Activated CD8-positive, alpha-beta T cell treated with anti-CD3 and anti-CD28 coated beads for 36 hours (primary cell): ENCODE measurements at regions of chr2 and their contacts with region 1.

Region 1: DNA sequence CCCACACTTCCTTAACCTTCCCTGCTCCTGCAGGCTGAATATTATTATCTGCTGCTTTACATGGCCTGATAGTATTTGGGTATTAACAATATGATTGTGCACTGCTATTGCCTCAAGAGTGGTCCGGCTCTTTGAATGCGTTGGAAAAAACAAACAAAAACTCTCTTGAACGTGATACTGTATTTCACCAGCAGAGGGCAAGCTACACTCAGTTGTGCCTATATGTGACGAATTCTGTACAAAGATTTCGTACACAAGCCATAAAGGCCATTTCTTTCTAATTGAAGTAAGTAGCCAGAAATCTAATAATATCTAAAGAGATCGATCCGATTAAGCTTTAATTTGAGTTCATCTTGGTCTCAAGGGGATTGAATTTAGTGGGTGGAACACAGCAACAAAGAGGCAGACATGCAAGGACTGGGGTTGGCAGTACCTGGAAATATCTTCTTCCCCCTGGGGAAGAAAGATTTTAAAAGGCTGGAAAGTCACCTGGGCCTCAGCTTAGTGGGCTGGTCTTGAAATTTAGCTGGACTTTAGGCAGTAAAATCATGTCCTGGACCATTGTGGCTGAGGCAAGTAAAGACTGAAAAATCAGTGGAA is 49.3 kb upstream of the RAB6D start:
- DNase-seq: peak; percentile 35
- ATAC-seq: peak; percentile 73
- H3K4me3 Mint-ChIP-seq: no peak overlapping the region
- H3K27ac Mint-ChIP-seq: no peak overlapping the region
- H3K4me1 Mint-ChIP-seq: peaks cover 4% of the 10 kb centered on the region
- H3K27me3 Mint-ChIP-seq: peaks cover 16% of the 10 kb centered on the region
- CTCF ChIP-seq: peak; percentile 80

Region 2: GRCh38 chr2:131154071-131154531 is 259.1 kb before region 1 on chr2:
- CTCF ChIA-PET with region 1: interaction called, 5 read pairs
- POLR2A ChIA-PET with region 1: no interaction called
- intact Hi-C with region 1: loop called (anchors 5 kb)
- DNase-seq: peak; percentile 95
- ATAC-seq: peak; percentile 98
- H3K4me3 Mint-ChIP-seq: no peak overlapping the region
- H3K27ac Mint-ChIP-seq: peak overlapping the region; percentile 26
- H3K4me1 Mint-ChIP-seq: peaks cover 32% of the 10 kb centered on the region
- H3K27me3 Mint-ChIP-seq: no peaks in the 10 kb centered on the region
- CTCF ChIP-seq: peak; percentile 77

Region 3: DNA sequence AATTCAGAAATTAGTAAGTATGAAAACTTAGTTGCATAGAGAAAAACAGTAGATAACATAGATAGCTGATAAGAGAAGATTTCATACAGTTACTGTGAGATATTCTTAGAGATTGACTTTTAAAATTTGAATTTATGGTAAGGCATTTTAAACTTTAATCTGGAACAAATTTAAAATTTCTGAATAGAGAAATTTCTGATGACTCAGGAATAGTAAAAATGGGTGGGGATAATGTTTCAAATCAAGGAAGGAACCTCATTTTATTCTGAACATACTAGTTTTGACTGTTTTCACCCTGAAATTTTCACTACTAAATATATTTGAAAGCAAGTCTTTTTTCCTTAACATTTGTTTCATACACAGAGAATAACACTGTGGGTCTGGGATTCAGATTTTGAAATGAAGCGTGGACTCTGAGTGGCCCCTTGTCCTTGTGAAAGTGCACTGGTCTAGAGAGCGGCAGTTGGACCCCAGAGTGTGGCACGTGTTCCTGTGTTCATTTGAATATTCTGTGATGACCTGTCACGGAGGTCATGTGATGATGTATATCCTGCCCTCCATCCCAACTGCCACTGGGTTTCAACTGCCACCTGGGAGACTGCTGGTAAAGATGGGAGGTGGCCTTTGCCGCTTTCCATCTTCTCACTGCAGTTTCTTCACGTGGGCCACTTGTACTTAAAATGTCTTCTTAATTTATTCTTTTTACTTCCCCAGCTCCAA is 10.8 kb before region 1 on chr2:
- CTCF ChIA-PET with region 1: interaction called, 15 read pairs
- POLR2A ChIA-PET with region 1: no interaction called
- intact Hi-C with region 1: no loop called
- DNase-seq: no peak
- ATAC-seq: no peak
- H3K4me3 Mint-ChIP-seq: no peak overlapping the region
- H3K27ac Mint-ChIP-seq: no peak overlapping the region
- H3K4me1 Mint-ChIP-seq: no peaks in the 10 kb centered on the region
- H3K27me3 Mint-ChIP-seq: peaks cover 7% of the 10 kb centered on the region
- CTCF ChIP-seq: no peak

Region 4: GRCh38 chr2:131425231-131425941 is 12.1 kb after region 1 on chr2:
- CTCF ChIA-PET with region 1: interaction called, 10 read pairs
- POLR2A ChIA-PET with region 1: no interaction called
- intact Hi-C with region 1: no loop called
- DNase-seq: no peak
- ATAC-seq: peak; percentile 24
- H3K4me3 Mint-ChIP-seq: peak overlapping the region; percentile 2
- H3K27ac Mint-ChIP-seq: no peak overlapping the region
- H3K4me1 Mint-ChIP-seq: peaks cover 10% of the 10 kb centered on the region
- H3K27me3 Mint-ChIP-seq: peaks cover 57% of the 10 kb centered on the region
- CTCF ChIP-seq: no peak

Region 5: GRCh38 chr2:131509615-131510014 is 96.4 kb after region 1 on chr2:
- CTCF ChIA-PET with region 1: no interaction called
- POLR2A ChIA-PET with region 1: no interaction called
- intact Hi-C with region 1: no loop called
- DNase-seq: no peak
- ATAC-seq: no peak
- H3K4me3 Mint-ChIP-seq: no peak overlapping the region
- H3K27ac Mint-ChIP-seq: no peak overlapping the region
- H3K4me1 Mint-ChIP-seq: peaks cover 5% of the 10 kb centered on the region
- H3K27me3 Mint-ChIP-seq: no peaks in the 10 kb centered on the region
- CTCF ChIP-seq: no peak

Region 6: DNA sequence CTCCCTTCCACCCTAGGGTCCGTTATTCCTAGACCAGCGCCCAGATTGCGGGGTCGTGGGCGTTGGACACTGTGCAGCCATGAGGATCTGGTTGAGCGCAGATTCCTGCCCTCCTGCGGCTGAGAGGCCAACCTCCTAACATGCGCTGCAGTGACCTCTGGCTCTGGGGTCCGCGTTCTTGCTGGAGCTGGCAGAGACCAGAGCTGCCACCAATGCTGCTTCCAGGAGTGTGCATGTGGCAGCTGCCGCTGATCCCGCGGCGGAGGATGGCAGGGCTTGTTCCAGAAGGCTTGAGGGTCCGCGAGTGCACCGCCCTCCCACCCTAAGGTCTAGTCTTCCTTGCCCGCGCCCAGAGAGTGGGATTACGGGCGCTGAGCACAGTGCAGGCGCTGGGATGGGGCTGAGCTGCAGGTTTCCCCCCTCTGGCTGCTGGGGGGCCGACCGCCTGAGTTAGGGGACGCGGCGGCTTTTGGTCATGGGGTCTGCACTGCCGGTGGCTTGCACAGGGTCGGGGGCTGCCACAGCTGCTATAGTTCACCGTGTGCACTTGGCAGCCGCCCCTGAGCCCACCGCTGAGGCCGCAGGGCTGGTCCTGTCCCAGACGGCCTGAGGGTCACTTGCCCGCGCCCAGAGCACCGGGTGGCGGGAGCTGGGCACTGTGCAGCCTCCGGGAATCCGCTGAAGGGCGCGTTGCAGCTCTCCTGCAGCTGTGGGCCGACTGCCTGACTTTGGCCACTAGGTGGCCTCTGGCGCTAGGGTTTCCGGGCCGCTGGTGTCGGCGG is 260.3 kb after region 1 on chr2:
- CTCF ChIA-PET with region 1: interaction called, 25 read pairs
- POLR2A ChIA-PET with region 1: no interaction called
- intact Hi-C with region 1: loop called (anchors 5 kb)
- DNase-seq: peak; percentile 76
- ATAC-seq: peak; percentile 85
- H3K4me3 Mint-ChIP-seq: no peak overlapping the region
- H3K27ac Mint-ChIP-seq: no peak overlapping the region
- H3K4me1 Mint-ChIP-seq: peaks cover 6% of the 10 kb centered on the region
- H3K27me3 Mint-ChIP-seq: peaks cover 12% of the 10 kb centered on the region
- CTCF ChIP-seq: peak; percentile 83